ENCODE measurements at regions of chr12 and their contacts with region 1.

Region 1: DNA sequence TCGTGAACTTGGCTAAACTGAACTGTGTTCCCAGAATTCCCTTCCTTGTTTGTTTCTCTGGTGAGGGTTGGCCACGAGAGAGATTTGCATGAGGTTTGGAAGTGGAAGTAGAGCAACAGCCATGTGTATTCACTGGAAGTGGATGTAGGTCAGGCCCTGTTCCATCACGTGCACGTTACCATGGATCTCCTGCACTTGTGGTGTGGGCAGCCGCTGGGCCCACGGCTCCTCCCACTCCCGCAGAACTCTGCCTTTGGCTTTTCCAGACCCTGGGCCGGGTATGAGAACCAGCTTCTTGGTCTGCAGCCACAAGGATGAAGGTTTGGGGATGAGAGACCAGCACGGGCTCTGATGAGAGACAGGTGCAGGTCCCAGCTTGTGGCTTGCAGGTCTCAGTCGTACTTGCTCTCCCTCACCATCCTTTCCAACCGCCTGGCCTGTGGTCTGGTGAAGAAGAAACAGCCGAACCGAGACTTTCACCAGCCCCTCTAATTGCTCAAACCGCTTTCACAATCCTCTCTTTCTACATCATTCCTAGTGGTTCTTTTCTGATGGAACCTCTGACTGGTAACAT is 94.9 kb downstream of the DUSP16 start:
- DNase-seq: peak; percentile 11
- ATAC-seq: 0 out of 2 replicates have a peak, but pooled peaks have one; percentile 14
- H3K4me3 ChIP-seq: no peak overlapping the region
- H3K27ac ChIP-seq: no peak overlapping the region
- H3K4me1 ChIP-seq: no peaks in the 10 kb centered on the region
- H3K27me3 ChIP-seq: no peaks in the 10 kb centered on the region
- CTCF ChIP-seq: no peak
- POLR2A ChIP-seq: no peak
- RAD21 ChIP-seq: no peak

Region 2: DNA sequence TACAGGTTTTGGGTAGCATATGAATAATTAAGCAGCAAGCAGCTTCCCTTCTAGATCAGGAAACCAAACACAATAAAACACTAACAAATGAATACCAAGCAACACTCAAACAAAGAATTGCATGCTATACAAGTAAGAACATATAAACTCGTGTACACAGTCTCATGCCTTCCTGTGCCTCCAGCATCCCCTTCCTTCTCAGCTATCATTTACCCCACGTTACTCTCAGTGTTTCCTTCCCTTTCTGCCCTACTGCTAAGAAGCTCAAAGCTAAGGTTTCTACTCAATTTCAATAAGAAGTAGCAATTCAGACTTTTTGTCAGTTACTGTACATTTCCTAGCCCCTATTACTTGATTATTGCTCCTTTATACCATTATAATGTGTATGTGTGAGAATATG is 13.9 kb after region 1 on chr12:
- CTCF ChIA-PET with region 1: no interaction called
- POLR2A ChIA-PET with region 1: no interaction called
- dilution Hi-C with region 1: no loop called
- in situ Hi-C with region 1: no loop called
- intact Hi-C with region 1: loop called (anchors 2 kb)
- DNase-seq: no peak
- ATAC-seq: no peak
- H3K4me3 ChIP-seq: no peak overlapping the region
- H3K27ac ChIP-seq: no peak overlapping the region
- H3K4me1 ChIP-seq: no peaks in the 10 kb centered on the region
- H3K27me3 ChIP-seq: no peaks in the 10 kb centered on the region
- CTCF ChIP-seq: no peak
- POLR2A ChIP-seq: no peak
- RAD21 ChIP-seq: no peak

Region 3: GRCh38 chr12:12505544-12506495 is 38.0 kb after region 1 on chr12:
- CTCF ChIA-PET with region 1: no interaction called
- POLR2A ChIA-PET with region 1: no interaction called
- dilution Hi-C with region 1: no loop called
- in situ Hi-C with region 1: no loop called
- intact Hi-C with region 1: no loop called
- DNase-seq: peak; percentile 65
- ATAC-seq: peak; percentile 48
- H3K4me3 ChIP-seq: peak overlapping the region; percentile 30; the same call in 1 of the 2 replicates
- H3K27ac ChIP-seq: peak overlapping the region; percentile 56; the same call in 1 of the 2 replicates
- H3K4me1 ChIP-seq: peaks cover 16% of the 10 kb centered on the region
- H3K27me3 ChIP-seq: no peaks in the 10 kb centered on the region
- CTCF ChIP-seq: no peak
- POLR2A ChIP-seq: no peak
- RAD21 ChIP-seq: no peak

Region 4: DNA sequence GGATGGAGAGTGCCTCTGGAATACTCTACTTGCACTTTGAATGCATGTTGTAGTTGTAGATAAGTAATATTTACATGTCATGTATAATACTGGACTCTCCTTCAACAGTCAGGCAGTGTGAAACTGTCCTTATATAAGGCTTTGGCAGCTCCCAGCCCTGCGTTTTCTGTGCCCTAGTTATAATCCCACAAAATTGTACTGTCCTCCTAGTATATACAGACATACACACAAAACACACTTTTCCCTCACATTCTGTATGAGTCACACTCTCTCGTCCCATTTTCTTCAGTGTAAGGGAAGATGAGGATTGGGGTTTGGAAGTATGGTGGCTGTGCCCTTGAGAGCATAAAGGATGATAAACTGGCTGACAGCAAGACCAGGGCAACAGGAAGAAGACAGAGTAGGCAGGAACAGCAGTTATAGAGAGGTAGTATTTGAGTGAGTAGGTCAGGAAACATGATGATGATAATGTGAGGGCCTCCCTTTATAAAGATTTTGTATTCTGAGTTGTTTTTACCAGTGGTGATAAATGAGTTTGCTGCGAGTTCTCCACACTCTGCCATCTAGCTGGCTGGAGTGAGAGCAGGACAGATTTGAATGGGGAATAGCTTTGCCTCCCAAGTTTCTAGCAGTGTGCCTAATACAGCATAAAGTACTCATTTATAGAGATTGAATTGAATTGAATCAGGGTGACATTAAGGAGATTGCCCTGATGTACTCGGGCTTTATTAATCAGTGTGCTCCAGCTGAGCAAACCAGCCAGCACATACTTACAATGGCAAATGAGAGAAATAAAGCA is 148.9 kb after region 1 on chr12:
- CTCF ChIA-PET with region 1: no interaction called
- POLR2A ChIA-PET with region 1: no interaction called
- dilution Hi-C with region 1: no loop called
- in situ Hi-C with region 1: no loop called
- intact Hi-C with region 1: no loop called
- DNase-seq: peak; percentile 44
- ATAC-seq: peak; percentile 5; the same call in 1 of the 2 replicates
- H3K4me3 ChIP-seq: no peak overlapping the region
- H3K27ac ChIP-seq: no peak overlapping the region
- H3K4me1 ChIP-seq: peaks cover 2% of the 10 kb centered on the region; the same call in 1 of the 2 replicates
- H3K27me3 ChIP-seq: no peaks in the 10 kb centered on the region
- CTCF ChIP-seq: no peak
- POLR2A ChIP-seq: no peak
- RAD21 ChIP-seq: no peak

Measured in IMR-90 (cell line).